A549 (cell line): ENCODE measurements at regions of chr7 and their contacts with region 1.

Region 1: DNA sequence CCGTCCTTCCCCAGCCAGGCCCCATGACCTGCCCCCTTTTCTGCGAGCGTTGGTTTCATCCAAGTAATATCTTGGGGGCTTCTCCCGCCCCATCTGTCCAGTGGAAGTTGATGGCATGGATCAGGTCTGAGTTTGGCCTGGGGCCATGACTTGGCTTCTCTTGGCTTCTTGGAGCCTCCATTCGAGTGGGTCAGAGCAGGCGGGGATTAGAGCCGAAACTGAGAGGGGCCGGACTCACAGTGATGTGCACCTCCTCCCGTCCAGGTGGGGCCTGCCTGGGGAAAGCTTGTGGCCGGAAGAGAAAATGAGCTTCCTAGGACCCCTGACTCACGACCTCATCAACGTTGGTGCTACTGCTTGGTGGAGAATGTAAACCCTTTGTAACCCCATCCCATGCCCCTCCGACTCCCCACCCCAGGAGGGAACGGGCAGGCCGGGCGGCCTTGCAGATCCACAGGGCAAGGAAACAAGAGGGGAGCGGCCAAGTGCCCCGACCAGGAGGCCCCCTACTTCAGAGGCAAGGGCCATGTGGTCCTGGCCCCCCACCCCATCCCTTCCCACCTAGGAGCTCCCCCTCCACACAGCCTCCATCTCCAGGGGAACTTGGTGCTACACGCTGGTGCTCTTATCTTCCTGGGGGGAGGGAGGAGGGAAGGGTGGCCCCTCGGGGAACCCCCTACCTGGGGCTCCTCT is 15.1 kb upstream of the LIMK1 start:
- DNase-seq: no peak
- ATAC-seq: no peak
- H3K4me3 ChIP-seq: no peak overlapping the region
- H3K27ac ChIP-seq: no peak overlapping the region
- H3K4me1 ChIP-seq: no peaks in the 10 kb centered on the region
- CTCF ChIP-seq: no peak
- EP300 ChIP-seq: no peak
- POLR2A ChIP-seq: no peak
- RAD21 ChIP-seq: no peak

Region 2: DNA sequence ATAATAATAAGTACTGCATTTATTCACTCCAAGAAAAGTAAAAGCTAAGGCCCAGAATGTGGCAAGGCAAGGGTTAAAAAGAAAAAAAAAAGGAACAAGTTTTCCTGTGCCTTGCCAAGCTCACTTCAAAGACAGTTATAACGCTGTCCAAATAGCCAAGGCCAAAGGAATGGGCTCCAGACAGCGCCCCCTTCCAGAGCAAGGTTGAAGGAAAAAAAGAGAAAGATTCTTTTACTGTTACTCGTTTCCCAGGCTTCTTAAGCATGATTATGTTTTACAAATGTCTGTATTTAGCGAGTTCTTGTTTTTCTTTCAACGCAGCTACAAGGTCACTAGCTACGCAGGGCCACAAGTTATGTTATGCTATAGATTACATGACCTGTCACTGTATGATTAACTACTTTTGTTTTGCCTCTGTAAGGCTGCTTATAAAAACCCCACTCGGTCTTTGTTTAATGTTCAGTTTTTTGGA is 96.5 kb after region 1 on chr7:
- CTCF ChIA-PET with region 1: interaction called, 10 read pairs
- POLR2A ChIA-PET with region 1: interaction called, 5 read pairs
- DNase-seq: peak in 1 of 2 experiments; percentile 48
- ATAC-seq: peak in 1 of 2 experiments; percentile 66; a peak in 3 of 6 replicates
- H3K4me3 ChIP-seq: no peak overlapping the region
- H3K27ac ChIP-seq: no peak overlapping the region
- H3K4me1 ChIP-seq: 0 out of 3 replicates have a peak, but pooled peaks cover 4% of the 10 kb centered on the region
- CTCF ChIP-seq: peak; percentile 38
- EP300 ChIP-seq: no peak
- POLR2A ChIP-seq: no peak
- RAD21 ChIP-seq: 0 out of 5 replicates have a peak, but pooled peaks of 1 of the 2 experiments have one; percentile 20

Region 3: GRCh38 chr7:74173866-74174605 is 105.5 kb after region 1 on chr7 and contains the start of gene EIF4H:
- CTCF ChIA-PET with region 1: interaction called, 12 read pairs
- POLR2A ChIA-PET with region 1: no interaction called
- DNase-seq: peak; percentile 88 to 96
- ATAC-seq: peak; percentile 96 to 97
- H3K4me3 ChIP-seq: peak within 1 kb of the TSS; percentile 96
- H3K27ac ChIP-seq: peak within 1 kb of the TSS; percentile 94 to 99
- H3K4me1 ChIP-seq: peaks cover 38% of the 10 kb centered on the region
- CTCF ChIP-seq: no peak
- EP300 ChIP-seq: no peak
- POLR2A ChIP-seq: peak; percentile 78
- RAD21 ChIP-seq: no peak
- polyA plus RNA-seq, gene EIF4H: 300 and 364 TPM in 2 replicates

Region 4: GRCh38 chr7:74183613-74184450 is 115.3 kb after region 1 on chr7:
- CTCF ChIA-PET with region 1: interaction called, 12 read pairs
- POLR2A ChIA-PET with region 1: no interaction called
- DNase-seq: peak; percentile 41 to 55
- ATAC-seq: peak; percentile 73 to 77; a peak in 5 of 6 replicates
- H3K4me3 ChIP-seq: no peak overlapping the region
- H3K27ac ChIP-seq: no peak overlapping the region
- H3K4me1 ChIP-seq: peaks cover 33% of the 10 kb centered on the region
- CTCF ChIP-seq: peak; percentile 52
- EP300 ChIP-seq: no peak
- POLR2A ChIP-seq: no peak
- RAD21 ChIP-seq: peak; percentile 15 to 41; a peak in 2 of 5 replicates

Region 5: DNA sequence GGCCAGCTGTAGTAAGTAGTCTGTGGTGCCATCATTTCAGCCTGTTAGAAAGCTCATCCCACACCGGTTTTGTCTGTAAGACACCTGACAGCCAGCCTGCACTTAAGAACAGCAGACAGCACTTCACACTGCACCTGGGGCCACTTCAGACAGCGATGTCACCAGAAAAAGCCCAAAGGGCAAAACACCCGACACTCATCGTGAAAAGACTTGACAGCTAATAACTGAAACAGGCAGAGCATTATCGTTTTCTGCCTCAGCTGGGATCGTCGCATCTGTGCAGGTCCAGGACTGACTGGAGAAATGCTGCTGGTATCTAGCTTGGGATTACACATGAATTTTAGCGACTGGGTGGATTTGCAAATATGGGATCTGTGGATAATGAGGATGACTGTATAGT is 124.5 kb after region 1 on chr7:
- CTCF ChIA-PET with region 1: interaction called, 25 read pairs
- POLR2A ChIA-PET with region 1: no interaction called
- DNase-seq: no peak
- ATAC-seq: no peak
- H3K4me3 ChIP-seq: no peak overlapping the region
- H3K27ac ChIP-seq: no peak overlapping the region
- H3K4me1 ChIP-seq: peaks cover 3% of the 10 kb centered on the region
- CTCF ChIP-seq: no peak
- EP300 ChIP-seq: no peak
- POLR2A ChIP-seq: no peak
- RAD21 ChIP-seq: no peak

Region 6: DNA sequence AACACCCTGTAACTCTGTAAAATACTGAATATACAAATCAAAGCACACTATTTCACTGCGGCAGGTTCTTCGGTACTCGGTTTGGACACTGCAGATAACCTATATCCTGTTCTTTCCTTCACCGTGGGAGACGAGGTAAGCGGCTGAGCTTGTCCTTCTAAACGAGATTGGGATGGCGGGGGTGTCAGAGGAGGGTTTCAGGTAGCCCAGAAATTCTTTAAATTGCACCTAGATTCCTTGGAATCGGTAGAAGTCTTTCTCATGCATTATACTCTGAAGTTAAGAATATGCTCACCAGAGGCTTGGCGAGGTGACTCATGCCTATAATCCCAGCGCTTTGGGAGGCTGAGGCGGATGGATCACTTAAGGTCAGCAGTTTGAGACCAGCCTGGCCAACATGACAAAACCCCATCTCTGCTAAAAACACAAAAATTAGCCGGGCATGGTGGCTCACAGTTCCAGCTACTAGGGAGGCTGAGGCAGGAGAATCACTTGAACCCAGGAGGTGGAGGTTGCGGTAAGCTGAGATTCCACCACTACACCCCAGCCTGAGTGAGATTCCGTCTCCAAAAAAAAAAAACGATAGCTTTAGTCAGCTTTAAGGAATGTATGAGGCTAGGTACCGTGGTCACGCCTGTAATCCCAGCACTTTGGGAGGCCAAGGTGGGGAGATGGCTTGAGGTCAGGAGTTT is 131.2 kb after region 1 on chr7:
- CTCF ChIA-PET with region 1: interaction called, 25 read pairs
- POLR2A ChIA-PET with region 1: no interaction called
- DNase-seq: no peak
- ATAC-seq: peak in 1 of 2 experiments; percentile 8; a peak in 2 of 6 replicates
- H3K4me3 ChIP-seq: no peak overlapping the region
- H3K27ac ChIP-seq: no peak overlapping the region
- H3K4me1 ChIP-seq: peaks cover 3% of the 10 kb centered on the region; the same call in 2 of the 3 replicates
- CTCF ChIP-seq: no peak
- EP300 ChIP-seq: no peak
- POLR2A ChIP-seq: no peak
- RAD21 ChIP-seq: no peak

Region 7: GRCh38 chr7:74395745-74396311 is 327.3 kb after region 1 on chr7:
- CTCF ChIA-PET with region 1: interaction called, 45 read pairs
- POLR2A ChIA-PET with region 1: interaction called, 3 read pairs
- DNase-seq: no peak
- ATAC-seq: no peak
- H3K4me3 ChIP-seq: no peak overlapping the region
- H3K27ac ChIP-seq: no peak overlapping the region
- H3K4me1 ChIP-seq: 0 out of 3 replicates have a peak, but pooled peaks cover 9% of the 10 kb centered on the region
- CTCF ChIP-seq: no peak
- EP300 ChIP-seq: no peak
- POLR2A ChIP-seq: no peak
- RAD21 ChIP-seq: no peak